ENCODE measurements at regions of chr14 and their contacts with region 1.

Region 1: GRCh38 chr14:72544619-72545387 is 349.1 kb downstream of the DPF3 start:
- DNase-seq: peak; percentile 9 to 59
- H3K4me3 ChIP-seq: no peak overlapping the region
- H3K27ac ChIP-seq: no peak overlapping the region
- H3K4me1 ChIP-seq: peaks cover 3 to 10% (median 8%) of the 10 kb centered on the region in 4 experiments
- H3K27me3 ChIP-seq: no peaks in the 10 kb centered on the region; a peak in 1 of 7 replicates
- CTCF ChIP-seq: no peak
- EP300 ChIP-seq: no peak
- POLR2A ChIP-seq: peak in 1 of 2 experiments; percentile 39; a peak in 1 of 3 replicates
- RAD21 ChIP-seq: peak in 1 of 2 experiments; percentile 19; a peak in 2 of 4 replicates

Region 2: GRCh38 chr14:72523424-72524294 is 21.1 kb before region 1 on chr14:
- CTCF ChIA-PET with region 1: interaction called, 10 read pairs
- POLR2A ChIA-PET with region 1: interaction called, 3 read pairs
- DNase-seq: no peak
- H3K4me3 ChIP-seq: no peak overlapping the region
- H3K27ac ChIP-seq: no peak overlapping the region
- H3K4me1 ChIP-seq: no peaks in the 10 kb centered on the region
- H3K27me3 ChIP-seq: no peaks in the 10 kb centered on the region; a peak in 1 of 7 replicates
- CTCF ChIP-seq: no peak
- EP300 ChIP-seq: no peak
- POLR2A ChIP-seq: no peak
- RAD21 ChIP-seq: no peak

Region 3: GRCh38 chr14:72554994-72555604 is 10.3 kb after region 1 on chr14:
- CTCF ChIA-PET with region 1: interaction called, 12 read pairs
- POLR2A ChIA-PET with region 1: interaction called, 4 read pairs
- DNase-seq: no peak
- H3K4me3 ChIP-seq: no peak overlapping the region
- H3K27ac ChIP-seq: no peak overlapping the region
- H3K4me1 ChIP-seq: peaks cover 3 to 12% (median 7%) of the 10 kb centered on the region in 4 experiments; a peak in 5 of 7 replicates
- H3K27me3 ChIP-seq: no peaks in the 10 kb centered on the region
- CTCF ChIP-seq: peak in 1 of 3 experiments; percentile 22; a peak in 1 of 4 replicates
- EP300 ChIP-seq: no peak
- POLR2A ChIP-seq: no peak
- RAD21 ChIP-seq: no peak